ENCODE measurements at regions of chrX and their contacts with region 1.

Region 1: GRCh38 chrX:33923262-33923661 is 208.9 kb downstream of the FAM47A start:
- DNase-seq: peak; percentile 21 to 60
- H3K4me3 ChIP-seq: no peak overlapping the region
- H3K27ac ChIP-seq: no peak overlapping the region
- H3K4me1 ChIP-seq: no peaks in the 10 kb centered on the region
- H3K27me3 ChIP-seq: peaks cover 0 to 8% of the 10 kb centered on the region in 2 donors
- CTCF ChIP-seq: no peak
- POLR2A ChIP-seq: no peak

Region 2: GRCh38 chrX:33721927-33722326 is 201.3 kb before region 1 on chrX:
- intact Hi-C with region 1: loop called (anchors 5 kb)
- DNase-seq: no peak
- H3K4me3 ChIP-seq: no peak overlapping the region
- H3K27ac ChIP-seq: no peak overlapping the region
- H3K4me1 ChIP-seq: no peaks in the 10 kb centered on the region
- H3K27me3 ChIP-seq: peaks cover 0 to 16% of the 10 kb centered on the region in 2 donors
- CTCF ChIP-seq: no peak
- POLR2A ChIP-seq: no peak

Region 3: DNA sequence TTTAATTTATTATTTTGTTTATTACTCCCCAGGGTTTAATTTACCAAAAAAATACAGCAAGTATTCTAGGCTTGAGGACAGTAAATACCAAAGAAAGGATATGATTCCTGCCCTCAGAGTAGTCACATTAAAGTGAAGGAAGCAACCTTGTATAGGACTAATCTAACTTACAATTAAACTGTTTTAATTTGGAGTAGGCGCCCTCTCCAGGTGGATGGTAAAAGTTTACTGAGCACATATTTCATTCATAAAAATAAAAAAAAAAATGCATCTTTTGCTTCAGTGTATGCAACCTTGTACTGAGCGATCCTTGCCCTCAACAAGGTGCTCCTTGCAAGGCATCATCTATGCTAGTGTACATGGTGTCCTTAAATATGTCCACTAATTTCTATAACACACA is 1802.9 kb after region 1 on chrX:
- intact Hi-C with region 1: no loop called
- DNase-seq: no peak
- H3K4me3 ChIP-seq: no peak overlapping the region
- H3K27ac ChIP-seq: no peak overlapping the region
- H3K4me1 ChIP-seq: no peaks in the 10 kb centered on the region
- H3K27me3 ChIP-seq: peaks cover 0 to 5% of the 10 kb centered on the region in 2 donors
- CTCF ChIP-seq: no peak
- POLR2A ChIP-seq: no peak